Tibial artery (tissue), 4 donors: ENCODE measurements at regions of chr6 and their contacts with region 1.

Region 1: DNA sequence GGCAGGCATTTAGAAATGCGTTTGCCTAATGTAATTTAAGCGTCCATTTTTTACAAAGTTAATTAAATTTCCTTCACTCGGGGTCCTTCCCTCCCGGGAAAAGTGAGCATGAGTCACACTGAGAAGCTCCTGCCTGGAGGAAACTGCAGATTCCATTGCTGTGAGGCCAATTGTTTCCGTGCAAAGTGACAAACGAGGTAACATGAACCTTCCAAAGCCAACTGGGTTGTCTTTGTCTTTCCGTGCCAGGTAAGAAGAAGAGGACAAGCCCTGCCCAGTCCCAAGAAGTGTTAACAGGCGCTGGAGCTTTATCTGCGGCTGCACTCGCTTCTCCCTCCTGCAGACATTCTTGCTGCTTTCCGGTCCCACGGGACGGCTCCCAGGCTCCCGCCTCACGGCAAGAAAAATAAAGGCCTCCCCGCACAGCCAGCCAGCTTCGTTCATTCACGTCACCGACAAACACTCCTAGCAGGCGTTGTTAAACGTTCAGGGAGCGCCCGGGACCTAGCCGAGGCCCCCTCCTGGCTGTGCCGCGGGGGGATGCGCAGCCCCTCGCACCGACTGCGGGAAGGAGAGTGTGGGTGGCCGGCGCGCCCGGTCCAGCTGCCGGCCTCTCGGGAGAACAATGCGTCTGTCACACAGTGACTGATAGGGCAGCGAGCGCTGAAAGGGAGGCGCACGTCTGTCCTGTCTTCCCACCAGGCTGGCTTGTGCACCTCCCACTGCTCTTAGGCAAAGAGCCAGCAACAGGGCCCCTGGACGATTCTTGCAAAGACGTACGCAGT is 61.5 kb upstream of the HDDC2 start:
- DNase-seq: peak; percentile 70 to 95
- H3K4me3 ChIP-seq: peak overlapping the region; percentile 56 to 65
- H3K27ac ChIP-seq: peak overlapping the region; percentile 90 to 91
- H3K4me1 ChIP-seq: peaks cover 0 to 68% (median 36%) of the 10 kb centered on the region in 4 donors
- H3K27me3 ChIP-seq: no peaks in the 10 kb centered on the region
- CTCF ChIP-seq: no peak

Region 2: DNA sequence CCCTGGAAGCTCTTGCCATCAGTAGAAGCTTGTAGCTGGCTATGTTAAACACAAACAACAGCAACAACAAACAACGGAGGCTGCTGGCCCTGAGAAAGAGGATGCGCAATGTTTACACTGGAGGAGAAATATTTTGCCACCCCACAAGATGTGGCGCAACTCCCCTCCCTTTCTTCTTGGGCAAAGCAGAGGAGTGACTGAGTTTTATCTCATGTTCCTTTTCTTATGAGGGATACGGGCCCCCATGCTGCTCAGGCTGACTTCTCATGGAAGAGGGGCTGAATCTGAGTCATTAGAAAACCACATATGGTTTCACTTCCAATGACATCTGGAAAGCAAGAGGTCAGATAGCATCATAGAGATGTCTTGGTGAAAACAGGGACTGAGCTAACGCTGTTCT is 14.4 kb after region 1 on chr6:
- intact Hi-C with region 1: no loop called
- DNase-seq: no peak
- H3K4me3 ChIP-seq: peak overlapping the region in 1 of 2 donors; percentile 5
- H3K27ac ChIP-seq: peak overlapping the region; percentile 64 to 68
- H3K4me1 ChIP-seq: peaks cover 0 to 25% (median 7%) of the 10 kb centered on the region in 4 donors
- H3K27me3 ChIP-seq: no peaks in the 10 kb centered on the region
- CTCF ChIP-seq: no peak

Region 3: DNA sequence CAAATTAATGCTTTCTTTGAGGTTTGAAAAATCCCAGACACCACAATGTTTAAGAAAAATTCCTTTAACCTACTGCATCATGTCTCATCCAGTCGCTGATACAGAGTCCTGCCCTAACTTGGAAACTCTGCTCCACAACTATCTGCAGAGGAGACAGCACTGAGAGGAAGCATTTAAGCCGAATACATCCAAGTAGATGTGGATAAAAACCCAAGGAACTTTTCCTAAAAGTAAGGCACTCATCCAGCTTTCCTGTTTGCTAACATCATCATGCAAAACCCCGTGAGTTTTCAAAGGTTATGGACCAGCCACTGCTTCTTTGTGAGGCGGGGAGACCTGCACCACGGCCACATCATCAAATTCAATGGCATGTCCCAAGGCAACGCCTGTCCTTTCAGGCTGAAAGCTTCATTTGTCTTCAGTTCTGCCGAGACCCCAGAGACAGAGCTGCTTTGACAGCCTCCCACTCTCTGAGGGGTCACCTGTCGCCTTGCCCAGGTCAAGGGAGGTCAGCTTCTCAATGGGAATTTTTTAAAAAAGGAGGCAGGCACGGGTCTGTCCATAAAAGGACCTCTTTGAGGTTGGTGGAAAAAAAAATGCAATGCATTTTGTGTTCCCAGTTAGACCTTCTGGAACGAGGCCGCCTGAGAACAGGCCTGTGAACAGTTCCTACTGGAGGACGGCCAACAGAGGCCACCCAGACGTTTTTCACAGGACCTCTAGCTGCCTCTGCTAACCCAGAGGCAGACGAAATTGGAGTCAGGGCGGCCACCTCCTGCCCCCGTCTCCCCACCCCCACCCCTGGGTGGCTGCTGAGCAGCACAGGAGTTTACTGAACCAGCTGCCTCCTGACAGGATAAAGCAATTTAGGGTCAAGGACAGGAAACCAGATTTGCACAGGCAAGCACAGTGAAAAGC is 81.0 kb after region 1 on chr6:
- intact Hi-C with region 1: loop called (anchors 10 kb)
- DNase-seq: peak; percentile 72 to 94
- H3K4me3 ChIP-seq: peak overlapping the region; percentile 50 to 57
- H3K27ac ChIP-seq: peak overlapping the region; percentile 79 to 91
- H3K4me1 ChIP-seq: peaks cover 0 to 65% (median 13%) of the 10 kb centered on the region in 4 donors
- H3K27me3 ChIP-seq: no peaks in the 10 kb centered on the region
- CTCF ChIP-seq: no peak